HEK293 (cell line): ENCODE measurements at regions of chr9 and their contacts with region 1.

Region 1: GRCh38 chr9:128067876-128068613 is at the start of gene SLC25A25:
- H3K4me3 ChIP-seq: peak within 1 kb of the TSS; percentile 80
- H3K27ac ChIP-seq: peak within 1 kb of the TSS; percentile 77
- H3K4me1 ChIP-seq: peaks cover 2% of the 10 kb centered on the region; the same call in 1 of the 2 replicates
- CTCF ChIP-seq: peak; percentile 28; the same call in 1 of the 2 replicates

Region 2: DNA sequence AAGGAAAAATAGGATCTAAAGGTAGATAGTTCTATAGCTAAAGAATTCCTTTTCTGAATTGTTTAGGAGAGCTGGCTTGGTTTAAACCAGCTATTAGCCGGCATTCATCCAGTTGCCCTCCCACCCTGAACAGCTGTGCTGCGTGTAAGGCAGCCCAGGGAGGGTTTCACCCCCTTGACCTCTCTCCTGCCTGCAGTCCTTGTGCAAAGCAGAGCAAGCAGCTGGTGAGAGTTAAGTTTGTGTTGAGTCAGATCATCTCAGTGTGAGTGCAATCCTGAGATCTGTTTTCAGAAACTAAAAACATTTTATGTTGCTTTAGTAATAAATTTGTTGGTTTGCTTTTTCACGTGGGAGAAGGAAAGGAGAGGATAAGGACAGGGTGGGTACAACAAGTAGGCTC is 13.0 kb after region 1 on chr9:
- CTCF ChIA-PET with region 1: interaction called, 16 read pairs
- POLR2A ChIA-PET with region 1: interaction called, 3 read pairs
- H3K4me3 ChIP-seq: no peak overlapping the region
- H3K27ac ChIP-seq: no peak overlapping the region
- H3K4me1 ChIP-seq: no peaks in the 10 kb centered on the region
- CTCF ChIP-seq: no peak